ENCODE measurements at regions of chr18 and their contacts with region 1.

Region 1: DNA sequence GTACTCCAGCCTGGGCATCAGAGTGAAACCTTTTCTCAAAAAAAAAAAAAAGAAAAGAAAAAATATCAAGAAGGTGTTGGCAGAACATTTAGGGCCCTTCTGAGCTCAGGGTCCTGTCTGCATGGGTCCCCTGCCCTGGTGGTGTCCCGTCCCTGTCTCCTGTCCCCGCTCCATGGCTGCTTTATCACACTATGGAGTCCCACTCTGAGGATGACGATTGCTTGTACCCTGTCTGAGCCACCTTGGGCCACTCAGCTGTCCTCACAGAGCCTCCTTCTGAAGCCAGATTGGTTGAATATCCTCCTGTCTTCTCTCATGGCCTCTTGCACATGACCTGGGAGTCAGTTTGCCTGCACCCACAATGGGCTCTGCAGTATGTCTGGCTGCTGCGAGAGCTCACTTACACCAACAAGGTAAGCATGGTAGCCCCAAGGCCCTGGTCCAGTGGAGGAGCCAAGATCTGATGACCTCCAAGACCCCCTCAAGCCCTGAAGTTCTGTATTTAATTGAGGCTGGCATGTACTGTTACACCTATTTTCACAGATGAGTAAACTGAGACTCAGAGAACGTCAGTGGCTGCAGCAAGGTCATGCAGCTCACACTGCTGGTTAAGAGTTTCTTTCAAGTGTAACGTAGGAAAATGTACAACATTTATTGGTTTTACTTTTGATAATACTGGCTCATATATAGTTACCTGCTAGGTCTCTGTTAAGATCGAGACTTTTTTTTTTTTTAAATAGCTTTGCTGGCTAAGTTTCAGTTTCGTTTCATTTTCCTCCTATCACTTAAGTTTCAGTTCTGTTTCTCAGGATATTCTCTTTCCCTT is 16.9 kb upstream of the ZCCHC2 start:
- DNase-seq: no peak
- ATAC-seq: peak; percentile 57 to 86 (median 78)
- H3K4me3 ChIP-seq: peak overlapping the region; percentile 7 to 54 (median 32)
- H3K27ac ChIP-seq: peak overlapping the region in 2 of 4 donors; percentile 67 to 69
- H3K4me1 ChIP-seq: peaks cover 0 to 3% (median 0%) of the 10 kb centered on the region in 3 donors
- H3K27me3 ChIP-seq: no peaks in the 10 kb centered on the region
- CTCF ChIP-seq: no peak

Region 2: DNA sequence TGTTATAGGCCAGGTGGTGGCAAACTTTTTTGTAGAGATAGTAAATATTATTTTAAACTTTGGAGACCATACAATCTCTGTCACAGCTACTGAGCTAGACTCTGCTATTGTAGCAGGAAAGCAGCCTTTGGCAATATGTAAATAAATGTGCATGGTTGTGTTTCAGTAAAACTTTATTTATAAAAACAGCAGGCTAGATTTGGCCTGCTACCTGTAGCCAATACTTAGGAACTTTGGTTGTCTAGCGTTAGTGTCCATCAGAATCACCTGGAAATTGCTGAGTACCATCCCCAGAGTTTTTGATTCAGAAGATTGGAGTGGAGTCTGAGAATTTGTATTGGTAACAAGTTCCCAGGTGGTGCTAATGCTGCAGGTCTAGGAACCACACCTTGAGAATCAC is 204.6 kb before region 1 on chr18:
- intact Hi-C with region 1: no loop called
- DNase-seq: no peak
- ATAC-seq: no peak
- H3K4me3 ChIP-seq: no peak overlapping the region
- H3K27ac ChIP-seq: no peak overlapping the region
- H3K4me1 ChIP-seq: no peaks in the 10 kb centered on the region
- H3K27me3 ChIP-seq: no peaks in the 10 kb centered on the region
- CTCF ChIP-seq: no peak

Region 3: DNA sequence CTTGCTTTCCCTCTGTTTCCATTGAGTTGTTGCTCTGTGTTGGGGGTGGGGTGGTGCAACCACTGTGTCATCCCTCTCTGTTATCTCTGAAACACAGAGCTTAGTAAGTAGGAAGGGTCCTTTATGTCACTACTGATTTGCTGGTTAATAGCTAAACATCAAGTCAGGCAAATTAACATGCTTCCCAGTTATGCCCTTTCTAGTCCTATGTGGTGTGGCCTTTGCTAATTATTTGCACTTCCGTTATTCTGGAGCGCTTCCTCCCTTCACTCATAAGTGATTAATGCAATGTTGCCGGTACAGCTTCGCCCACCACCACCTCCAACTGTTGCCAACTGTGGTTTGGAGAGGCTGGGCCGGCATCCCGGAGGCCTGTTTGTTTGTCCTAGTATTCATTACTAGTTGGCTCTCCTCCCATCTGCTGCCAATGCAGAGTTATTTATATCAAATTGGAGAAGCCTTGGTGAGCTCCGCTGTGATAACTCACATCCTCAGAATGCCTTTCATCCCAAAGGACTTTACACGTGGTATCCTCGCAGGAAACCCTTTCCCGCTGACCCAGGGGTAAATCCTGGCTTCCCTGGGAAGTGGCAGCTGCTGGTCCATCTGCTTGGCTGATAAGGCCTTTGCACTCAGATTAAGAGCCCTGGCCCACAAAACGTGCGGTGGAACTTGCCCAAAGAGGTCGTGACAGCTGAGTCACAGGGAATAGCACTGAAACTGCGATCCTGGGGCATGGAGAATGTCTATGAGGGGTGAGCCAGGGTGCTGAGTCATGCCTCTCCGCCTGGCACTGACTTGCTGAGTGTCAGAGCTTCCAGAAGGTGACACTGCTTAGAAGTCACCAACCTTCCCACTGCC is 55.1 kb before region 1 on chr18:
- intact Hi-C with region 1: loop called in 1 of 3 experiments (anchors 10 kb)
- DNase-seq: peak; percentile 71 to 91 (median 83)
- ATAC-seq: peak; percentile 95 to 97 (median 96)
- H3K4me3 ChIP-seq: no peak overlapping the region
- H3K27ac ChIP-seq: peak overlapping the region in 3 of 4 donors; percentile 29 to 51 (median 34)
- H3K4me1 ChIP-seq: peaks cover 0 to 15% (median 0%) of the 10 kb centered on the region in 3 donors
- H3K27me3 ChIP-seq: no peaks in the 10 kb centered on the region
- CTCF ChIP-seq: no peak